Panc1 (cell line): ENCODE measurements at regions of chr6 and their contacts with region 1.

Region 1: DNA sequence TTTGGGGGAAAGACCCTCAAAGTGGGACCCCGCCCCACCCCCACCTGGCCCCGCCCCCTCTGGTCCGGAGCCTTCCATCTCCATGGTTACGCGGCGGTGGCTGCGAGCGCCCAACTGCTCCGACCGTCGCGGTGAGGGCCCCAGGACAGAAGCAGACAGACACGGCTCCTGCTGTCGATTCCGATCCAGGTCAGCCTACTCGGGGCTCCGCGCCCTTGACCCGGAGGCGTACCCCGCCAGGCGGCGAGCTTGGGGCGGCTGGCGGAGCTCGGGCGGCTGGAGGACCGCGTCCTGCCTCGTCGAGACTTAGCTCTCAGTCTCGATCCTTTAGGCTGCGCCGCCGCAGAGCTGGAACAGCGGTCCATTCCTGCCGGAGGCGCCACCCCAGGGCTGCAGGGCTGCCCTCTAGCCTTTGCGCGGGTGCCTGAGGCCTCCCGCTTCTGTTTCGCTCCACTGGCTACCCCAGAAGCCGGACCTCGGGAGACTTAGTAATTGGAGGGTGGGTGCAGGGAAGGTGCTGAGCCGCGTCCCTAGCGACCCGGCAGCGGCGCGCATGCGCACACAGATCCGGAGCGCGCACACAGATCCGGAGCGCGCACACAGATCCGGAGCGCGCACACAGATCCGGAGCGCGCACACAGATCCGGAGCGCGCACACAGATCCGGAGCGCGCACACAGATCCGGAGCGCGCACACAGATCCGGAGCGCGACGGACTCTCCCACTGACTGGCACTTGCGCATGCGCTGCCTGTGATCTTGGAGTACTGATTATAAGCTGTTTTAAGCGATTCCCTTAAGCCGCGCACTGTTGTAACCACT is at the start of gene CFAP206:
- DNase-seq: peak; percentile 51
- ATAC-seq: peak; percentile 95
- H3K4me3 ChIP-seq: peak within 1 kb of the TSS; percentile 89 to 95
- H3K27ac ChIP-seq: peak within 1 kb of the TSS; percentile 97
- H3K4me1 ChIP-seq: peaks cover 7% of the 10 kb centered on the region; the same call in 1 of the 2 replicates
- H3K27me3 ChIP-seq: no peaks in the 10 kb centered on the region
- CTCF ChIP-seq: peak; percentile 24; the same call in 1 of the 2 replicates
- total RNA-seq, gene CFAP206: 2.4 TPM

Region 2: GRCh38 chr6:87472525-87473418 is 64.7 kb after region 1 on chr6 and contains the start of gene SLC35A1:
- CTCF ChIA-PET with region 1: no interaction called
- POLR2A ChIA-PET with region 1: no interaction called
- in situ Hi-C with region 1: no loop called
- intact Hi-C with region 1: loop called (anchors 5 kb)
- DNase-seq: peak; percentile 52
- ATAC-seq: peak; percentile 98
- H3K4me3 ChIP-seq: peak within 1 kb of the TSS; percentile 86 to 95
- H3K27ac ChIP-seq: peak within 1 kb of the TSS; percentile 96
- H3K4me1 ChIP-seq: peaks cover 9% of the 10 kb centered on the region
- H3K27me3 ChIP-seq: no peaks in the 10 kb centered on the region; the same call in 1 of the 2 replicates
- CTCF ChIP-seq: no peak
- total RNA-seq, gene SLC35A1: 14.9 TPM